Sigmoid colon (tissue), 7 donors: ENCODE measurements at regions of chr13 and their contacts with region 1.

Region 1: DNA sequence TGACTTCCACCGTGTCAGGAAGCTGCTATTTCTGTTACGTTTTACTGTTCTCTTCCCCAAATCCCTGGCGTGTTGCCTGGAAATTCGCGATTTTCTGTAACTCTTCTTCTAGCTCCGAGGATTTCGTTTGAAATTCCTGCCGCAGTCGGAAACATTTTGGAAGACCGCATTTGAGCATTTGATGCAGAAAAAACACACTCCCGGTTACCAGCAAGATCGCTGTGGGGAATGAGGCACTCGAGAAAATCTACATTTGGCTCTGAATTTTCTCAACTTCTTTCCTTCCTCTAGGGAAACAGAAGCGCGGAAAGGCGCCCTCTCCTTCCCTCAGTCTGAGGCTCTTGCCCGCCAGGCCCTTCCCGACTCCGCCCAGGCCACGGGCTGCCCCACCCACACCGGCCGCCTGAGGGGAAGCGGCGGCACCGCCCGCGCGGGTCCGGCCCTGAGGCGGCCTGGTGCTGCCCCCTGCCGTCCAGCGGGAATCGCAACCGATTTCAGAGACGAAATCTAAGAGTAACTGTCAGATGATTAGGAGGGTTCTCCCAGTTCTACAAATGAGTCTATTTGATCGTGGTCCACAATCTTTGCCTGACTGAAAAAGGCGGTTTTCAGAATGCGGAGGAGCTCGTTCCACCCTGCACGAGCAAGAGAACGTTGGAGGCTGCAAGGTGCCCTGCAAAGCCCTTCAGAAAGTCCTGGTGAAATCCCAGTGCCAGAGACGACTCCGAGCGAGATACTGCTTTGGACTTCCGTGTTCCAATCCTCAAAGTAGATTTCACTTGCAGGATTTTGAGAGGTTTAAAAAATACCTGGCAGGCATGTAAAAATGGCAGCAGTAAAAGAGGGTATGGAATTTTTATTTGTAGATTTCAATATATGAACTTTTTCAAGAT is 18.4 kb upstream of the TUBGCP3 start:
- DNase-seq: peak; percentile 96
- H3K4me3 ChIP-seq: peak overlapping the region; percentile 31 to 51 (median 46)
- H3K27ac ChIP-seq: peak overlapping the region; percentile 75 to 80 (median 79)
- H3K4me1 ChIP-seq: peaks cover 0 to 12% (median 5%) of the 10 kb centered on the region in 4 donors
- H3K27me3 ChIP-seq: no peaks in the 10 kb centered on the region
- CTCF ChIP-seq: peak; percentile 80 to 93 (median 84)
- EP300 ChIP-seq: no peak
- POLR2A ChIP-seq: no peak

Region 2: DNA sequence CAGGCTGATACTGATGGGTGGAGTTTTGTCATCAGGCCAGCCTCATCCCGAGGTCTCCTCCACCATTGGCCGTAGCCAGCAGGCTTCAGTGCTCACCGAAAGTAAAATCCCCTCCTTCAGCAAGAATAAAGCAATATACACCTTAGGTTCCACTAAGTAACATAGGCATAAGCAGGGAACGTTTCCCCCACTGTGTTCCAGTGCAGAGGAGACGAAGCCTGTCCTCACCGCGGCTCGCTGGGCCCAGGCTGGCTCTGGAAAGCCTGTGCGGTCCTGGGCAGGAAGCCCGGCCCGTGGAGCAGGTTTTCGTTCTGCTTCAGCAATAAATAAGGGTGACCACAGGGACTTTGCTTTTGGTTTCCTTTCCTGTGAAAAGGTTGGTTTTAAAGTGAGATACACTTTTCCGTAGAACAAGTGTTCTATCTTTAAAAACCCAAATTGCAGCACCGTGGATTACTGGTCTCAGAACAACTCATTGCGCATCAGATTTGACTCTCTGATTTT is 1302.3 kb before region 1 on chr13:
- intact Hi-C with region 1: no loop called
- DNase-seq: no peak
- H3K4me3 ChIP-seq: no peak overlapping the region
- H3K27ac ChIP-seq: no peak overlapping the region
- H3K4me1 ChIP-seq: no peaks in the 10 kb centered on the region
- H3K27me3 ChIP-seq: no peaks in the 10 kb centered on the region
- CTCF ChIP-seq: no peak
- EP300 ChIP-seq: no peak
- POLR2A ChIP-seq: no peak

Region 3: DNA sequence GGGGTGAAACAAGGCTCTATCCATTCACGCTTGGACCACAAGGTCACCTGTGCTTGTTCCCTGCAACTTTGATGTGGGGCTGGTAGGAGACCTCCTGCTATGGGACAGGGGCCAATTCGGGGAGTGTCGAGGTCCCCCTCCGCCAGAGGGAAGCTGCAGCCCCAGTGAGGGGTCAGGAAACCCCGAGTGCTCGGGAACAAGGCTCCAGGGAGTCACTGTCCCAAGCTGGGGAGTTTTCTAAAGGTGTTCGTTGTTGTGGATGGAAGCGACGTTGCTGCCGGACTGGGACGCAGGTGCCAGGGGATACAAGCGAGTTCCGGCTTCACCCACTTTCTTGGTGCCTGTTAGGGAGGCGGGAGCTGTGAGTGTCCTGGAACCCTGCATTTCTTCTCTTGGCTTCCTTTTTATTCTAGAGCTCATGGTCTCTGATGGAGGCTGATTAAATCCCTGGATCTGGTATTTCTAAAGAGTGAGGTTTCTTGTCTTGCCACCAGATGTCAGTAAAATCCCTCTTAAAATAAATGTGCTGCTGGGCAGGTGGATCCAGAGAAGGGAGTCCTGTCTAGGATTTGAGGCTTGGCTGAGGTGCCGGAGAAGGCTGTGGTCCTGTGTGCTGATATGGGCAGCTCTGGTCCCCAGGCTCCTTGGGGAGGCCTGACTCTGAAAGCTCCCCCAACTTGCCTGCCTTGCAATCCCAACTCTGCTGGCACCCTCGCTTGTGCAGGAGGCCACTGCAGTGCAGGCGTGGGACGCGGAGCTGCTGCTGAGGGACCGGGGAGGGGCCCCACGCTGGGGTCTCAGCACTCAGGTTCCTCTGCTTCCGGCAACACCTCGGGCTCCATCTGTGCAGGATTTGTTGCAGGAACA is 1132.0 kb before region 1 on chr13:
- intact Hi-C with region 1: loop called (anchors 5 kb)
- DNase-seq: no peak
- H3K4me3 ChIP-seq: no peak overlapping the region
- H3K27ac ChIP-seq: no peak overlapping the region
- H3K4me1 ChIP-seq: no peaks in the 10 kb centered on the region
- H3K27me3 ChIP-seq: peaks cover 0 to 5% (median 0%) of the 10 kb centered on the region in 3 donors
- CTCF ChIP-seq: peak in 3 of 4 experiments; percentile 47 to 52 (median 47)
- EP300 ChIP-seq: no peak
- POLR2A ChIP-seq: no peak

Region 4: DNA sequence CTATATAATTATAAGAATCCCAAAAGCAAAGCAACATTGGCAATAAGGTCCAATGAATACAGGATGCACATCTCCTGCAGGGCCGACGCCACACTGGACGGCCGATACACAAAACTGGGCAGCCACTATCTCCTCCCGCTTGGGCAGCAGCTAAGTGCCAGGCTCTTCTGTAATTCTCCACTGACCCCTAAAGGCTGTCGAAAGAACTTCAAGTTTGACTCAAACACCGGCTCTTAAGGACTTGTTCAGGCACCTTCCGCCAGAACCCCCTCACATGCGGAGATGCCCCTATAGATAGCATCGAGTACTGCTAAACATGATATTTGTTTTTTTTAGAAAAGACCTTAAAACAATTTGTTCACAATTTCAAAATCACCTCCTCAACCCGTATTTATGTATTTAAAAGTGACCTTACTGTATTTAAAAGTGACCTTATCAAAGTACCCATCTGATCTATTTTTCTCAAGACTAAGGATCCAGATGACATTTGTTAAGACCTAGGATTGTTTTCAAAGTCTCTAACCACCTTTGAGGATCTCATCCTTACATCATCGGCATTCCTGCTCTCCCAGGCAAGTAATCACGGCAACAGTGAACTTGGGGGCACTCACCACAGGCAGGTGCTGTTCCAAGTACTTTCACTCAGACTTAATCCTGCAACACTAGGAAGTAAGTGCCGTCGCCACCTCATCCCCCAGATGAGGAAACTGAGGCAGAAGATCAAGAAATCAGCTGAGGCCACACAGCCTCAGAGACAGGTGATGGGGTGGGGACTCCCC is 96.2 kb before region 1 on chr13:
- intact Hi-C with region 1: loop called (anchors 10 kb)
- DNase-seq: no peak
- H3K4me3 ChIP-seq: no peak overlapping the region
- H3K27ac ChIP-seq: no peak overlapping the region
- H3K4me1 ChIP-seq: no peaks in the 10 kb centered on the region
- H3K27me3 ChIP-seq: no peaks in the 10 kb centered on the region
- CTCF ChIP-seq: peak in 3 of 4 experiments; percentile 25 to 33 (median 27)
- EP300 ChIP-seq: no peak
- POLR2A ChIP-seq: no peak

Region 5: DNA sequence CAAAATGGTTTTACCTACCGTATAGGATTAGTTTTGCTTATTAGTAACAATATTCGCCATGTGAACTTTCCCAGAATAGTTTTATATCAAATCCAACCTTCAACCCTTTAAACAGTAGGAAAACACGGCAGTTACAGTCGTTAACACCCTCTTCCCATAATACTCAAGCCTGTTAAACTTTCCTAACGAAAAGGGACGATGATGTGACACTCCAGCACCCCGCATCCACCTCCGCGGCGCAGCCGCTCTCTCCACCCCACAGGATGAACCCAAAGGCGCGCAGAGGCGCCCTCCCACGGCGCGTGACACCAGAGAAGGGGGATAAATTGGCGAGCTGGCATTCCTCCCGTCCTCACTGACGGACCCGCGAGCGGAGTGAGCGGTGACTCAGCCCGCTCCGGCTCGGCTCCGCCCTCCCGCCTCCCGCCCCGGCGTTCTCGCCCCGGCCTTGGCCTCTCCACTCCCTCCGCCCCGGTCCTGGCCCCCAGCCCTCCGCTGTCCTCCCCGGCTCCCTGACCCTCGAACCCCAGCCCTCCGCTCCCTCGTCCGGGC is 19.1 kb before region 1 on chr13:
- intact Hi-C with region 1: loop called (anchors 1 kb)
- DNase-seq: peak; percentile 95
- H3K4me3 ChIP-seq: peak overlapping the region; percentile 78 to 90 (median 88)
- H3K27ac ChIP-seq: peak overlapping the region; percentile 96 to 99 (median 98)
- H3K4me1 ChIP-seq: peaks cover 0 to 30% (median 17%) of the 10 kb centered on the region in 4 donors
- H3K27me3 ChIP-seq: no peaks in the 10 kb centered on the region
- CTCF ChIP-seq: no peak
- EP300 ChIP-seq: no peak
- POLR2A ChIP-seq: no peak